Body of pancreas (tissue), 4 donors: ENCODE measurements at regions of chr16 and their contacts with region 1.

Region 1: GRCh38 chr16:74709441-74709877 is 8.8 kb upstream of the MLKL start:
- DNase-seq: peak; percentile 78 to 86 (median 83)
- ATAC-seq: peak; percentile 97
- H3K4me3 ChIP-seq: no peak overlapping the region
- H3K27ac ChIP-seq: no peak overlapping the region
- H3K4me1 ChIP-seq: no peaks in the 10 kb centered on the region
- H3K27me3 ChIP-seq: no peaks in the 10 kb centered on the region
- CTCF ChIP-seq: peak; percentile 87 to 98 (median 96)
- POLR2A ChIP-seq: no peak

Region 2: DNA sequence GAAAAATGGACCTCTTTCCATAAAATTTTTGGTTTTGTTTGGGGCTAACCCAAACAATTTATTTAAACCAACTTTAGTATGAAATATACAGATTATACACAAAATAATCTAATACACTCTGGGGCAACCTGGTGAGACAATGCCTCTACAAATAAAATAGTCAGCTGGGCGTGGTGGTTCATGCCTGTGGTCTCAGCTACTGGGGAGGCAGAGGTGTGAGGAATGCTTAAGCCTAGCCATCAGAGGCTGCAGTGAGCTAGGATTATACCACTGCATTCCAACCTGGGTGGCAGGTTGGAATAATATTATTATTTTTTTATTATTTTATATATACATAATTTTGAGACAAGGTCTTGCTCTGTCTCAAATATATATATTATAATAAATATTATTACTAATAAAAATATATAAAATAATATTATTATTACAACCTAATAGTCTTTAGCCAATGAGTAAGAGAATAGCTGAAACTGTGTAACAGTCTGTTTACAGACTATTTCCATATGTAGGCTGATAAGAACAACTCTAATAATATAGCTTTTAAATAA is 153.0 kb before region 1 on chr16:
- intact Hi-C with region 1: no loop called
- DNase-seq: no peak
- ATAC-seq: no peak
- H3K4me3 ChIP-seq: no peak overlapping the region
- H3K27ac ChIP-seq: no peak overlapping the region
- H3K4me1 ChIP-seq: peaks cover 7% of the 10 kb centered on the region
- H3K27me3 ChIP-seq: no peaks in the 10 kb centered on the region
- CTCF ChIP-seq: no peak
- POLR2A ChIP-seq: no peak

Region 3: DNA sequence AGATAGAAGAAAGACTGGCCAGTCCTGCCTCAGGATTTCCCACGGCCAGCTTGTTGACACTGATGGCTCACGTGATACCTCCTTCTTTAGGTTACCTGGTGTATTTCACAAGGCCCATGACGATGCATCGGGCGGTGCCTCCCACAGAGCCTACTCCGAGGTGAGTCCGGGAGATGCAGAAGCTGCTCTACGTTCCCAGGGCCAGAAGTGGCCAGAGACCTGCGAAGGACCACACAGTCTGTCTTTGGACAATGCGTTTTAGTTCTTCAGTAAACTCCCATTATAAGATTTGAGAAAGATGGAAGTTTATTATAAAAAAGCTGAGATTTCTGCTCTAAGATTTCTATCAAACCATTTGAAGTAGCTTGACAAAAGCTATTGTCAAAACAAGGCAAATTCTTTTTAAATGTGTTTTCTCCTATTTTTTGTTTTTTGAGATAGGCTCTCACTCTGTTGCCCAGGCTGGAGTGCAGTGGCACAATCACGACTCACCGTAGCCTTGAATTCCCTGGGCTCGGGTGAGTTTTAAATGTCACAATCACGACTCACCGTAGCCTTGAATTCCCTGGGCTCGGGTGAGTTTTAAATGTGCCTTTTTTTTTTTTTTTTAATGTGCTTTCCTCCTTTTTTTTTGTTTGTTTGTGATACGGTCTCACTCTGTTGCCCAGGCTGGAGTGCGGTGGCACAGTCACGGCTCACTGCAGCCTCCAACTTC is 134.4 kb after region 1 on chr16:
- intact Hi-C with region 1: no loop called
- DNase-seq: no peak
- ATAC-seq: no peak
- H3K4me3 ChIP-seq: no peak overlapping the region
- H3K27ac ChIP-seq: no peak overlapping the region
- H3K4me1 ChIP-seq: no peaks in the 10 kb centered on the region
- H3K27me3 ChIP-seq: no peaks in the 10 kb centered on the region
- CTCF ChIP-seq: no peak
- POLR2A ChIP-seq: no peak

Region 4: GRCh38 chr16:74862741-74863244 is 153.3 kb after region 1 on chr16:
- intact Hi-C with region 1: loop called (anchors 5 kb)
- DNase-seq: no peak
- ATAC-seq: peak; percentile 70
- H3K4me3 ChIP-seq: no peak overlapping the region
- H3K27ac ChIP-seq: no peak overlapping the region
- H3K4me1 ChIP-seq: peaks cover 15% of the 10 kb centered on the region
- H3K27me3 ChIP-seq: no peaks in the 10 kb centered on the region
- CTCF ChIP-seq: peak; percentile 77 to 90 (median 87)
- POLR2A ChIP-seq: no peak

Region 5: DNA sequence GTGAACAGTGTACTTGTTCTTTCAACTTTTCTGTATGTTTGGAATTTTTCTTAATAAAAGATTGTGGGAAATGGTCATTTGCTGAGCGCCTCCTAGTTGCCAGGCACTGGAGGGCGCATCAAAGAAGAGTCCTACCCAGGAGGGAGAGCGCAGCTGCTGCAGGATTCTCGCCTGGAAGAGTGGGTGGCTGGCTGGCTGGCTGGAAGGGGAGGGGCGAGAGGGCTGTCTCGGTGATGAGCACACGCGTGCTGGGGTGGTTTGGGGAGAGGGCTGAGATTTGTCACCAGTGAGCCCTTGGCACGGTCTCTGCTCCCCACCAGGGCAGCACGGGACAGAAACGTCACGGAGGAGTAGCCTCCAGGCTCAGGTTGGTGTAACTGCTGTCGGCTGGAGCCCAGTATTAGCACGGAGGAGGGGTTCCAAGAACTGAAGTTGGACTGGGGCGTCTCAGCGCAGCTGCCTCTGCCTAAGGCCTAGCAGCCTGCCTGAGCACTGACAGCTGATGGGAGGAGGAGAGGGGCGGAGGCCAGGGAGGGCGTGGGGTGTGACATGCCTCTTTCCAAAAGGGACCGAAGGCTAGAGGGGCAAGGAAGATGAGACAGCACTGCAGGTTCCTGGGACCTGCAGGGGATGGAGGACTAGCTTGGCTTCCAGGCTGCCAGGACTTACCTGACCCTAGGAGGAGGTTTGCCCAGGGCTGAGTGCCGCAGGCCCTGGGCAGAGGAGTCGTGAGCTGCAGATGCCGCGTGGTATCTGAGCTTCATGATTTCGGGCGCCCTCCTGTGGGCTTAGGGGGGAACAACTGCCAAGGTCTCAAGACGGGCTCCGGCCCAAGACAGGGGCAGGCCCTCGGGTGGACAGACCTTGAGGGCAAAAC is 401.4 kb after region 1 on chr16:
- intact Hi-C with region 1: loop called (anchors 10 kb)
- DNase-seq: peak; percentile 91 to 93 (median 92)
- ATAC-seq: peak; percentile 78
- H3K4me3 ChIP-seq: no peak overlapping the region
- H3K27ac ChIP-seq: peak overlapping the region; percentile 1 to 82 (median 38)
- H3K4me1 ChIP-seq: peaks cover 47% of the 10 kb centered on the region
- H3K27me3 ChIP-seq: no peaks in the 10 kb centered on the region
- CTCF ChIP-seq: peak; percentile 80 to 96 (median 92)
- POLR2A ChIP-seq: peak in 1 of 3 donors; percentile 12